Activated CD4-positive, alpha-beta memory T cell treated with anti-CD3 and anti-CD28 coated beads for 36 hours (primary cell): ENCODE measurements at regions of chr9 and their contacts with region 1.

Region 1: DNA sequence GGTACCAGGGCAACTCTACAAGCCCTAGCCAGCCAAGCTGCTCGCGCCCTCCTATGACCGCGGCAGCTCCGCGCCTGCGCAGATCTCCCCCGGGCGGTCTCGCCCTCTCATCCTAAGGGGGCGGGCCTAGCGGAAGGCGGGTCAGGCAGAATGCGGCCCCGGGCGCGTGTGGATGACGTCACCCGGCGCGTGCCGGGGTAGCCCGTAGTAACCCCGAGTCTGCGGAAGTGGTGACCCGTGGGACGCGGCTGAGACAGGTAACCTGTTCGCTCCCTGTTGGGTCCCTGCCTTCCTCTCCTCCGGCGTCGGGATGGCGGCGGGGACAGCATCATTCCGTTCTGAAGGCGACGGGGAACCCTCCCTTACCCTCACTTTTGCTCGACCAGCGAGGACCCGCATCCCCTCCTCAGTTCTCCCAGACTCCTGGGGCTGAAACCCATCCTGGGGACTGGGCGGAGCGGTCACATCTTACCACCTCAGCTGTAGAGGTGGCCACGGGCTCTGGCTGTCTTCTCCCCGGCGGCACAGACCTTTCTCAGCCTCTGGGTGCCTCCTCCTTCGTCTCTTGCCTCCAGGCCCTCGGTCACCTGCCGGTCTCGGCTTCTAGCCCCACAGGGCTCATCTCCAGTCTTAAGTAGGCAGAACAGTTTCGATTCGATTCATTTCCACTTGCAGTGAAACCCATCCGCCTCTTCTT is at the start of gene AOPEP:
- DNase-seq: peak; percentile 99
- H3K4me3 Mint-ChIP-seq: peak within 1 kb of the TSS; percentile 98
- H3K27ac Mint-ChIP-seq: peak within 1 kb of the TSS; percentile 98
- H3K4me1 Mint-ChIP-seq: peaks cover 12% of the 10 kb centered on the region
- H3K27me3 Mint-ChIP-seq: peaks cover 2% of the 10 kb centered on the region
- total RNA-seq, gene AOPEP: 10.7 to 12.2 TPM

Region 2: DNA sequence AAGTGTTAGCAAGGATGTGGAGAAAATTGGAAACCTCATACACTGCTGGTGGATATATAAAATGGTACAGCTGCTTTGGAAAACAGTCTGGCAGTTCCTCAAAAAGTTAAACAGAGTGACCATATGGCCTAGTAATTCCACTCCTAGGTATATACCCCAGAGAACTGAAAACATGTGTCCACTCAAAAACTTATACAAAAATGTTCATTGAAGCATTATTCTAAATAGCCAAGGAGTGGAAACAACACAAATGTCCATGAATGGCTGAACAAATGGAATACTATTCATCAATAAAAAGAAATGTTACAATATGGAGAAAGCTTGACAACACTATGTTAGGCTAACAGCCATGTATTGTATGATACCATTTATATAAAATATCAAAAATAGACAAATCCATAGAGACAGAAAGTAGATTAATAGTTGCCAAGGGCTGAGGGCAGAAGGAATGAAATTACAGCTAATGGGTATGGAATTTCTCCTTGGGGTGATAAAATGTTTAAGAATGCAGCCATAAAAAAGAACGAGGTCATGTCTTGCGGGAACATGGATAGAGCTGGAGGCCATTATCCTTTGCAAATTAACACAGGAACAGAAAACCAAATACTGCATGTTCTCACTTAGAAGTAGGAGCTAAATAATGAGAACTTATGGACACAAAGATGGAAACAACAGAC is 53.7 kb before region 1 on chr9:
- CTCF ChIA-PET with region 1: interaction called, 3 read pairs
- POLR2A ChIA-PET with region 1: interaction called, 3 read pairs
- intact Hi-C with region 1: loop called (anchors 1 kb)
- DNase-seq: no peak
- H3K4me3 Mint-ChIP-seq: no peak overlapping the region
- H3K27ac Mint-ChIP-seq: no peak overlapping the region
- H3K4me1 Mint-ChIP-seq: peaks cover 7% of the 10 kb centered on the region
- H3K27me3 Mint-ChIP-seq: peaks cover 5% of the 10 kb centered on the region

Region 3: DNA sequence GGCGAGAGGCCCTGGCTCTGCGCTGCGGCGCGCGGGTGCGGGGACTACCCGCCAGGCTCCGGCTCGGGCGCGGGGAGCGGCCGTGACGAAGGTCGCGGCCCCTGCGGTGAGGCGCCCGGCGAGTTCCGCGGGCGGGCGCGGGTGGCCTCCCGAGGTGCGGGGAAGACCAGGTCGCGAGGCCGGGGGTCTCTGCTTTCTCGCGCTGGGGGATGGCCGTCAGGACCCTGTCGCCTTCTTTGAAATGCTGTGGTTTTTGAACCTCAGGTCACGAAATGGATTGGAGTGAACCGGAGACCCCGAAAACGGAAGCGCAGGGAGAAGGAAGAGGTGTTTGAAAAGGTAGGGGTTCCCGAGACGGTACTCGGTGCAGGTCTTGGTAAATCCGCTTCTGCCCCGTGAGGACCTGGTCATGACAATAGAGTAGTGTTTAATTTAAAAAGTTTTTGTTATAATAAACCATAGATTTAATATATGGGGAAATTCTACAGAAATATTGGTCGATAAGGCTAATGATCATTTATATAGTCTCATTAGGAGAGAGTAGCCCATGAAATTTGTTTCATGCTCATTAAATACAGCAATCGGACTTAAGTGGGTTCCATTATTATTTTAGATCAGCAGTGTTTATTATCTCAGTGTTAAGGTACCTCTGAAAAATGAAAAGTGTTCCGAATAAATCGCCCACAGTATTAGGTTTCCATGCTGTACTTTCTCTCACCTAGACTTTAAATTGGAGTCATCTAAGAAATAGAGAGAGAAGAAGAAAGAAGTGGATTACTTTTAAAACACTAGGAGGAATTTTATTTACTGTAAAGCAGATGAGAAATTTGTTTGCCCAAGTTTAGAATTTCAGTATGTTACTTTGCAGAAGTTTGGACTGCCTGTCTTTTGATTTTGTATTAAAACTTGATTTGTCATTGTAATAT is 278.9 kb after region 1 on chr9:
- CTCF ChIA-PET with region 1: no interaction called
- POLR2A ChIA-PET with region 1: no interaction called
- intact Hi-C with region 1: loop called (anchors 2 kb)
- DNase-seq: no peak
- H3K4me3 Mint-ChIP-seq: peak overlapping the region; percentile 77
- H3K27ac Mint-ChIP-seq: no peak overlapping the region
- H3K4me1 Mint-ChIP-seq: peaks cover 28% of the 10 kb centered on the region
- H3K27me3 Mint-ChIP-seq: peaks cover 22% of the 10 kb centered on the region